H1 (cell line): ENCODE measurements at regions of chr17 and their contacts with region 1.

Region 1: DNA sequence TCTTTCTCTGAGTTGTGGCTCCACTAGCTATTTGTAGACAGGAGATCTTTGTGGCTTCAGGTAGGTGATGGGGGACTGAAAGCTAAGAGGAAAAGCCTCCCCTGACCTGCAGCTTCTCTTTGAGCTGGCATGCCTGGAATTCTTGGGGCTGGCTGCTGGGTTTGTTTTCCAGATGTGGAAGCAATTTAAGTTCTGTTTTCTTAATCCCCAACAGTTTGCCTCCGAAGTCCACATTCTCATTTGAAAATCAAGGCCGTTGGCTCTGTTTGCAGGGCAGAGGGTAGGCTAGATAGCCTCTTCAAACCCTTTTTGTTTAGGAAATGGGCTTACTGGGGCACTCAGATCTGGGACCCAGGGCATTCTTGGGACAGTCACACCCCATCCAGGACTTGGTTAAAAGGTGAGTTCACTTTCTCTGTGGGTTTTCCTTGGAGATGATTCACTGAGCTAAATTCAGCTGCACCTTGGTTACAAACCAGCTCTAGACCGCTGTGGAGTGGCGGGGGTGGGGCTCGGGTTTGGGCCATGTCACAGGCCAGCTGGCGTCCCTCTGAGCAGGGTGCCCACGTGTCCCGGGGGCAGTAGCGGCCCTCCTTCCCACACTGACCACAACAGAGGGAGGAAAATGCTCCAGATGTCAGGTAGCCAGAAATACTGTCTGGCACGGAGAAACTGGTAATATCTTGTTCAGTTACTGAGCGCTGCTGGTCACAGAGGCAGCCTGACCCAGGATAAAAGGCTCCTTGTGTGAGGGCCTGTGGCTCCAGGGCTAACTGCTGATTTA is 108.5 kb downstream of the RAB11FIP4 start:
- DNase-seq: peak in 1 of 2 experiments; percentile 58
- H3K4me3 ChIP-seq: peak overlapping the region in 1 of 4 experiments; percentile 0; a peak in 2 of 8 replicates
- H3K27ac ChIP-seq: peak overlapping the region; percentile 43; the same call in 1 of the 2 replicates
- H3K4me1 ChIP-seq: peaks cover 16 to 35% (median 22%) of the 10 kb centered on the region in 4 experiments
- H3K27me3 ChIP-seq: no peaks in the 10 kb centered on the region
- CTCF ChIP-seq: no peak
- EP300 ChIP-seq: no peak
- POLR2A ChIP-seq: no peak
- RAD21 ChIP-seq: no peak; a peak in 1 of 4 replicates

Region 2: GRCh38 chr17:31294820-31295488 is 205.0 kb before region 1 on chr17:
- CTCF ChIA-PET with region 1: no interaction called
- POLR2A ChIA-PET with region 1: no interaction called
- DNase-seq: no peak
- H3K4me3 ChIP-seq: no peak overlapping the region
- H3K27ac ChIP-seq: no peak overlapping the region
- H3K4me1 ChIP-seq: peaks cover 0 to 3% (median 0%) of the 10 kb centered on the region in 4 experiments; a peak in 1 of 7 replicates
- H3K27me3 ChIP-seq: no peaks in the 10 kb centered on the region
- CTCF ChIP-seq: no peak
- EP300 ChIP-seq: no peak
- POLR2A ChIP-seq: no peak
- RAD21 ChIP-seq: no peak

Region 3: DNA sequence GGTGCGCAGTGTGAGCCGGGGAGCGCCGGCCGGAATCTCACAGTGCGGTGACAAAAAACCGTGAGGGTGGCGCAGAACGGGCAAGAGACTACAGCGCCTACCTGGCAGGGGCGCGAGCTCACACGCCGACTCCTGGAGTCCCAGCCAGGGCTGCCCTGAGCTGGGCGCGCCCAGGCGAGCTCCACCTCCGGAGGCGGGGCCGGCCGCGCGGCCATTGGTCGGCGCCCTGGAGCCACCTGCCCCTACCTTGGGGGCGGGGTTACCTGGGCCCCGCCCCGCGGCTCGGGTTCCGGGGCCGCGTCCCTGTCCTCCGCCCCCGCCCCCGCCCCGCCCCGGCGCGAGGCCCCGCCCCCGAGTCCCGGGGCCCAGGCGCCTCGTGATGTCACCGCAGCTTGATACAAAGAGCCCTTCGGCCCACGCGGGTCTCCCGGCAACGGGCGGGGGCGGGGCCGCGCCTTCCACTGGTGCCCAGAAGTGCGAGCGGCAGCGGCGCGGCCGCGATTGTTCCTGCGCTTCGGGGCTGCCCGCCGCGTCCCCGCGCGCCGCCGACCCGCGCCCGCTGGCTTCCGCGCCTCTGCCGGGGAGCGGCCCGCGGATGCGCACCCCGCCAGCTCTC is 12.2 kb before region 1 on chr17:
- CTCF ChIA-PET with region 1: interaction called, 4 read pairs
- POLR2A ChIA-PET with region 1: interaction called, 36 read pairs
- DNase-seq: peak; percentile 86
- H3K4me3 ChIP-seq: peak overlapping the region; percentile 70 to 82 (median 72)
- H3K27ac ChIP-seq: peak overlapping the region; percentile 4; the same call in 1 of the 2 replicates
- H3K4me1 ChIP-seq: peaks cover 7 to 35% (median 25%) of the 10 kb centered on the region in 4 experiments
- H3K27me3 ChIP-seq: peaks cover 0 to 5% (median 2%) of the 10 kb centered on the region in 4 experiments; a peak in 1 of 7 replicates
- CTCF ChIP-seq: no peak
- EP300 ChIP-seq: no peak
- POLR2A ChIP-seq: peak; percentile 84 to 91
- RAD21 ChIP-seq: peak in 1 of 2 experiments; percentile 9; a peak in 1 of 4 replicates